ENCODE measurements at regions of chr19 and their contacts with region 1.

Region 1: GRCh38 chr19:37979547-37980082 is 72.6 kb downstream of the SIPA1L3 start:
- DNase-seq: no peak
- ATAC-seq: peak in 1 of 8 donors; percentile 26
- H3K4me3 ChIP-seq: no peak overlapping the region
- H3K27ac ChIP-seq: no peak overlapping the region
- H3K4me1 ChIP-seq: peaks cover 0 to 4% (median 0%) of the 10 kb centered on the region in 9 donors
- H3K27me3 ChIP-seq: no peaks in the 10 kb centered on the region
- CTCF ChIP-seq: no peak

Region 2: DNA sequence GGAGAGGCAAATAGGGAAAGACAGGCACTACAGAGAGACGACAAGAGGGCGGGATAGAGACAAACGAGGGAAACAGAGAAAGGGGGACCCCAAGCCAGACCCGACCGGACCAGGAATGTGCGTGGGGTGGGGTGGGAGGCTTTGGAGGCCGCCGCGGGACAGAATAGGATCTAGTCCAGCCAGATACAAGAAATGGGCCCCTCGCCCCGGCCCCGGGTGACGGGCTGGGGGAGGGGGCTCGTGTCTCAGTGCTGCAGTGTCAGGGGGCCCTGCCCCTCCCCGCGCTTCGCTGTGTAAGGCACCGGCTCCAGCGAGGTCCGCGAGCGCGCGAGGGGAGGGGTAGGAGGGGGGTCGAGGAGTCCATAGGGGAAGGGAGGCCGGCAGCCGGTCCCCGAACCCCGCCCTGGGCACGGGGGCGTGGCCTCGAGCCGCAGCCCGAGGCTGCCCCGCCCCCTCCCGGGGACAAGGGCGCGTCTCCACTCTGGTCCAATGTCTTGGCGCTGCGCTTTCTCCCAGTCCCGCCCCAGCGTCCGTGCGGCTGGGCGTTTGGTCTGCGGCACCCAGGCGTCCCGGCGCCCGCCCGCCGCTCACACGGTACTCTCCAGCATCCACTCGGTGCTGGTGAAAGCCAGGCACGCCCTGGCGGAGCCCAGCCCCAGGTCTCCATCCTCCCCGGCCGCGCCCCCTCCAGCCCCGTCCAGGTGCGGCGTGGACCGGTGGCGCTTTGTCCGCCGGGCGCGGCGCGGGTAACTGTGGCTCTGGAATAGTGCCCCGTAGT is 1327.6 kb after region 1 on chr19:
- intact Hi-C with region 1: loop called in 1 of 10 experiments (anchors 10 kb)
- DNase-seq: peak in 1 of 2 donors; percentile 25
- ATAC-seq: peak in 6 of 8 donors; percentile 28 to 69 (median 46)
- H3K4me3 ChIP-seq: peak overlapping the region in 8 of 10 donors; percentile 4 to 42 (median 22)
- H3K27ac ChIP-seq: no peak overlapping the region
- H3K4me1 ChIP-seq: peaks cover 0 to 15% (median 7%) of the 10 kb centered on the region in 9 donors
- H3K27me3 ChIP-seq: peaks cover 13 to 77% (median 64%) of the 10 kb centered on the region in 7 donors
- CTCF ChIP-seq: no peak

Measured in heart right ventricle (tissue), 16 donors.